A673 (cell line): ENCODE measurements at regions of chr1 and their contacts with region 1.

Region 1: DNA sequence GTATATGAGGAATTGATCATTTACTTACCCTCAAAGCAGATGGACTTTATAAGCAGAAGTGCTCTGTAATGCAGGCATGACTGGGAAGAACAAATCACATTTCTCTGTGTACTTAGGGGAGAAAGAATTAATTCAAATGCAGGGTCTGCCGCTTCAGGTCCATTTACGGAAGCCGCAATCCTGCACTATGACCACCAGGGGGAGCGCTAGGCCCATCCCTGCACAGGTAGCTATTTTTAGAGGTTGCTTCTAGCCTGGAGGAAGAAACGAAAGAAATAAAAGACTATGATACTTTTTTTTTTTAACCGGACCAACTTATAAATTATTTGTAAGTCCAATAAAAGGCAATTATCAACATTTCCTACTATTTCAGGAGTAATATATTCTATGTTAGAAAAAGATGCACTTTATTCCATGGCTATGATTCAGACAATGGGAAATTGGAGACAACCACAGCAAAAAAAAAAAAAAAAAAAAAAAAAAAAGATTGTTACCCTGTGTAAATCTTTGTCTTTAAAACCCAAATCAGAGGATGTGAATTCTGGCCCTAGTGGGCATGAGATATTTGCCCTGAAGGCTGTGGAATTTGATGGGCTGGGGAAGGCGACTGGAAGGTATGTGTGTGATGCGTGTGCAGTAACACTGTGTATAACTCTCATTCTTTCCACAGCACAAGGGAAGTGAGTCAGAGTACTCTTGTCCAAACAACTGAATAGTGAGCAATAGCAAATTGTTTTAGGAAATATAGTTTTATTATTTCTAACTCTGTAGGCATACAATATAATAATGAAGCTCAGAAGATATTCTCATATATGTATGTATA is 12.9 kb upstream of the FYB2 start:
- DNase-seq: peak; percentile 86
- H3K4me3 ChIP-seq: no peak overlapping the region
- H3K27ac ChIP-seq: no peak overlapping the region
- H3K4me1 ChIP-seq: peaks cover 10% of the 10 kb centered on the region
- H3K27me3 ChIP-seq: no peaks in the 10 kb centered on the region
- CTCF ChIP-seq: peak; percentile 97

Region 2: GRCh38 chr1:56758135-56758534 is 73.9 kb before region 1 on chr1:
- CTCF ChIA-PET with region 1: no interaction called
- POLR2A ChIA-PET with region 1: no interaction called
- intact Hi-C with region 1: no loop called
- DNase-seq: no peak
- H3K4me3 ChIP-seq: no peak overlapping the region
- H3K27ac ChIP-seq: no peak overlapping the region
- H3K4me1 ChIP-seq: no peaks in the 10 kb centered on the region
- H3K27me3 ChIP-seq: peaks cover 14% of the 10 kb centered on the region
- CTCF ChIP-seq: no peak

Region 3: DNA sequence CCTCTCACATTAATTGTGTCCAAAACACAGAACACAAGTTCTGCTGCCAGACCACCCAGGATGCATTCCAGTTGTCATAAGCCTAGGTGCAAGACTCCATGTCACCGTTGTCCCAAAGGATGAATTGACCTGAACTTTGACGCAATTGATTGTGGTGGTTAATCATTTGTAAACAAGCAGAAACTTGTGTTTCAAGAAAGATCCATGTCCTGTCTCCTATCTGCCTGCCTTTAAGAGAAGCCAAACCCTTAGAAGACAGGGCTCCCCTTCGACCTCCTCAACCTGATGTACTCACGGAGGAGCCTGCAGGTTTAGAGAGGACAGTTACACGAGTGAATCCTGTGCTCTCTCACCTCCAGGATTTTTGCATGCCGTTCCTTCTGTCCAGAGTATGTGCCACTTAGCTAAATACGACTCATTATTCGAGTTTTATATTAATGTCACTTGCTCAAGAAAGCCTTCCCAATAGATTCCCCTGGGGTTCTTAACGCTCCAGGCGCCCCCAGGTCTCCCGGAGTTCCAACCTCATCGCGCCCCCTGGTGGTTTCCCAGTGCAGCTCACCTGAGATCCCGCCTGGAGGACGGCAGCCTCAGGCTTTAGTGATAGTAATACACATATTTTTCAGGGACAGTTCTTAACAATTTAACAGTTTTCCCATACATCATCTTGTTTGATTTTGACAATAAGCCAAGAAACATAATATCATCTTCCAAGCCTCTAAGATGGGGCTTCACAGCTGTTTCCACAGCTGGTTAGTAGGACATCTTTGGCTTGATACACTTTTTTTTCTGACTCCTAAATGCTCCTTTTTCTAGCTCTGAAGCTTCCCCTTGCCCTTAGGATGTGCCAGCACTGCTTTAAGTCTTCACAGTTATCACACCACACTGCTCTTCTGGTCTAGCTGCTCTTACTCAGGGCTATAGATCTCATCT is 136.1 kb after region 1 on chr1:
- CTCF ChIA-PET with region 1: interaction called, 6 read pairs
- POLR2A ChIA-PET with region 1: no interaction called
- intact Hi-C with region 1: loop called (anchors 1 kb)
- DNase-seq: peak; percentile 67
- H3K4me3 ChIP-seq: no peak overlapping the region
- H3K27ac ChIP-seq: no peak overlapping the region
- H3K4me1 ChIP-seq: peaks cover 5% of the 10 kb centered on the region
- H3K27me3 ChIP-seq: no peaks in the 10 kb centered on the region
- CTCF ChIP-seq: peak; percentile 90

Region 4: DNA sequence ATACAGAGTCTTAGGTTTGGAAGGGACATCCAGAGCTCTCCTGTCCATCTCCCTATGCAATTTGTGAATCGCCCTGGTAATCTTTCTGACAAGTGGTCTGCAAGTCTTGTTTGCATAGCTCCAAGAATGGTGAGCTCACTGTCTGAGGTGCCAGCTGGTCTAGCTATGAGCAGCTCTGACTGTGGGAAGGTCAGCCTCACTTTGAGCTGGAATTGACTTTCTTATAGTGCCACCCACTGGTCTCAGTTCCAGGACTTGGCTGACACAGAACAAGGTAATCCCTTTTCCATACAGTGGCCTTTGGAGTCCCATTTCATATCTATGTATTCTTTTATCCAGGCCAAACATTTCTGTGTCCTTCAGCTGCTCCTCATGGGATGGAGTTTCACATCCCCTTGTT is 229.3 kb after region 1 on chr1:
- CTCF ChIA-PET with region 1: no interaction called
- POLR2A ChIA-PET with region 1: no interaction called
- intact Hi-C with region 1: no loop called
- DNase-seq: no peak
- H3K4me3 ChIP-seq: no peak overlapping the region
- H3K27ac ChIP-seq: no peak overlapping the region
- H3K4me1 ChIP-seq: no peaks in the 10 kb centered on the region
- H3K27me3 ChIP-seq: no peaks in the 10 kb centered on the region
- CTCF ChIP-seq: no peak

Region 5: GRCh38 chr1:58047265-58047858 is 1215.3 kb after region 1 on chr1:
- CTCF ChIA-PET with region 1: no interaction called
- POLR2A ChIA-PET with region 1: no interaction called
- intact Hi-C with region 1: loop called (anchors 10 kb)
- DNase-seq: peak; percentile 69
- H3K4me3 ChIP-seq: no peak overlapping the region
- H3K27ac ChIP-seq: no peak overlapping the region
- H3K4me1 ChIP-seq: peaks cover 9% of the 10 kb centered on the region
- H3K27me3 ChIP-seq: no peaks in the 10 kb centered on the region
- CTCF ChIP-seq: peak; percentile 92

Region 6: DNA sequence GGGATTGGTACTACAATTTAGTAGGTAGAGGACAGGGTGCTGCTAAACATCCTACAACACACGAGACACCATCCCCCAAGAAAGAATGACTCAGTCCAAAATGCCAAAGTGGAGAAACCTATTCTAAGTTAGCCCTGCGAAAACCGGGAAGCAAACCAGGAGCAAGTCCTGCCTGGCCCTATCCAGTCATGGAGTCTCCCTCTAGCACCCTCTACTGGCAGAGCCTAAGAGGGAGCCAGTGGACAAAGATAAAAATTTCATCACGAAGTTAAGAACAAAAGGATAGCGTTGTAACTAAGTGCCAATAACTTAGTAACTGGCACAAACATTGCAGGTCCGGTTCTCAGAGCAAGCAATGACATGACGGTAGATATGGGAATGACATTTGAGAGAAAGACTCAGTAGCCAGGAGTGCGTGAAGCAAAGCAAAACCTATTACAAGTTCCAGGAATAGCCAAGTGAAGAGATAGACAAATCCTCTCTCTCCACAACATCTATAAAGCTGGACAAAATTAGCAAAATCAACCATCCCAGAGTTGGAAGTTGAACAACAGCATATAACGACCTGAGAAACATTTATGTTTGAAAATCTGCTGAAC is 1331.0 kb after region 1 on chr1:
- CTCF ChIA-PET with region 1: no interaction called
- POLR2A ChIA-PET with region 1: no interaction called
- intact Hi-C with region 1: loop called (anchors 5 kb)
- DNase-seq: peak; percentile 87
- H3K4me3 ChIP-seq: no peak overlapping the region
- H3K27ac ChIP-seq: no peak overlapping the region
- H3K4me1 ChIP-seq: peaks cover 17% of the 10 kb centered on the region
- H3K27me3 ChIP-seq: no peaks in the 10 kb centered on the region
- CTCF ChIP-seq: peak; percentile 98